ENCODE measurements at regions of chr16 and their contacts with region 1.

Region 1: GRCh38 chr16:10181196-10182162 is 749 bp downstream of the GRIN2A start:
- DNase-seq: peak; percentile 63
- H3K4me3 ChIP-seq: peak overlapping the region in 2 of 3 experiments; percentile 17 to 32
- H3K27ac ChIP-seq: no peak overlapping the region
- H3K4me1 ChIP-seq: peaks cover 31% of the 10 kb centered on the region
- H3K27me3 ChIP-seq: peaks cover 19% of the 10 kb centered on the region
- CTCF ChIP-seq: peak; percentile 68 to 96

Region 2: GRCh38 chr16:9134739-9135138 is 1046.7 kb before region 1 on chr16:
- CTCF ChIA-PET with region 1: no interaction called
- dilution Hi-C with region 1: no loop called
- in situ Hi-C with region 1: no loop called
- intact Hi-C with region 1: loop called (anchors 10 kb)
- DNase-seq: no peak
- H3K4me3 ChIP-seq: no peak overlapping the region
- H3K27ac ChIP-seq: no peak overlapping the region
- H3K4me1 ChIP-seq: peaks cover 3% of the 10 kb centered on the region
- H3K27me3 ChIP-seq: no peaks in the 10 kb centered on the region
- CTCF ChIP-seq: peak; percentile 42 to 70

Region 3: GRCh38 chr16:9159839-9160550 is 1021.5 kb before region 1 on chr16:
- CTCF ChIA-PET with region 1: no interaction called
- dilution Hi-C with region 1: no loop called
- in situ Hi-C with region 1: loop called (anchors 5 to 25 kb)
- intact Hi-C with region 1: loop called (anchors 2 kb)
- DNase-seq: peak; percentile 68
- H3K4me3 ChIP-seq: no peak overlapping the region
- H3K27ac ChIP-seq: no peak overlapping the region
- H3K4me1 ChIP-seq: no peaks in the 10 kb centered on the region
- H3K27me3 ChIP-seq: no peaks in the 10 kb centered on the region
- CTCF ChIP-seq: peak; percentile 84 to 86

Region 4: DNA sequence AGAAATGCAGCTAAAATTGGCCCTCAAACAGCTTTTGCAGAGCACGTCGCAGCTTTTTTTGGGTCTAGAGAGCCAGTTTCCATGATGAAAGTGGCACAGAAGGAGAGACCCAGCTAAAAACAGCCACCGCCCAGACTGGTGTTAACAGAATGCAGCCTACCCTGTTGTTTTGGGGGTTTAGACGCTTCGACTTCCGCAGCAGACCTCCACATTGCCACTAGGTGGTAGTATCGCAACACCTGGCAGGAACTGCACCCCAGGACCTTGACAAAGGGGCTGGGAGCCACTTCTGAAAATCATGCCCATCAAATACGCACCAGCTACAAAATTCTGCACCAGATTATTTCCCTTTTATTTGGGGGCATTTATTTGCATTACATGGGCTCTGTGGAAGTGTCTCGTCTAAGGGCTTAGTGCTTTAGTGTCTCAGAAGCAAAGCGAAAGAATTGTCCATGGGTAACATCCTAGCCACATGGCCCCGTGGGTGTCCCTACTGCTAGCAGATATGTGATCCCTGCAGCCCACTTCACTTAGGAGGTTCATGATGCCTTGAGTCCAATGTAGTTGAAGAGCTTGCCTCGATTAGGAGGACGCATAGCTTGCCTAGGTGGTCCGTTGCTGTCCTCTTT is 922.9 kb before region 1 on chr16:
- CTCF ChIA-PET with region 1: no interaction called
- dilution Hi-C with region 1: no loop called
- in situ Hi-C with region 1: no loop called
- intact Hi-C with region 1: loop called (anchors 1 kb)
- DNase-seq: peak; percentile 12
- H3K4me3 ChIP-seq: no peak overlapping the region
- H3K27ac ChIP-seq: no peak overlapping the region
- H3K4me1 ChIP-seq: no peaks in the 10 kb centered on the region
- H3K27me3 ChIP-seq: no peaks in the 10 kb centered on the region
- CTCF ChIP-seq: peak; percentile 34 to 45

Region 5: GRCh38 chr16:9647981-9648712 is 533.3 kb before region 1 on chr16:
- CTCF ChIA-PET with region 1: no interaction called
- dilution Hi-C with region 1: no loop called
- in situ Hi-C with region 1: loop called in 1 of 2 experiments (anchors 25 kb)
- intact Hi-C with region 1: loop called (anchors 1 kb)
- DNase-seq: peak; percentile 9
- H3K4me3 ChIP-seq: no peak overlapping the region
- H3K27ac ChIP-seq: no peak overlapping the region
- H3K4me1 ChIP-seq: no peaks in the 10 kb centered on the region
- H3K27me3 ChIP-seq: no peaks in the 10 kb centered on the region
- CTCF ChIP-seq: peak; percentile 64 to 77

Region 6: GRCh38 chr16:10039220-10040096 is 142.0 kb before region 1 on chr16:
- CTCF ChIA-PET with region 1: no interaction called
- dilution Hi-C with region 1: no loop called
- in situ Hi-C with region 1: no loop called
- intact Hi-C with region 1: loop called (anchors 10 kb)
- DNase-seq: no peak
- H3K4me3 ChIP-seq: no peak overlapping the region
- H3K27ac ChIP-seq: no peak overlapping the region
- H3K4me1 ChIP-seq: no peaks in the 10 kb centered on the region
- H3K27me3 ChIP-seq: peaks cover 2% of the 10 kb centered on the region
- CTCF ChIP-seq: peak in 1 of 2 donors; percentile 17

Region 7: DNA sequence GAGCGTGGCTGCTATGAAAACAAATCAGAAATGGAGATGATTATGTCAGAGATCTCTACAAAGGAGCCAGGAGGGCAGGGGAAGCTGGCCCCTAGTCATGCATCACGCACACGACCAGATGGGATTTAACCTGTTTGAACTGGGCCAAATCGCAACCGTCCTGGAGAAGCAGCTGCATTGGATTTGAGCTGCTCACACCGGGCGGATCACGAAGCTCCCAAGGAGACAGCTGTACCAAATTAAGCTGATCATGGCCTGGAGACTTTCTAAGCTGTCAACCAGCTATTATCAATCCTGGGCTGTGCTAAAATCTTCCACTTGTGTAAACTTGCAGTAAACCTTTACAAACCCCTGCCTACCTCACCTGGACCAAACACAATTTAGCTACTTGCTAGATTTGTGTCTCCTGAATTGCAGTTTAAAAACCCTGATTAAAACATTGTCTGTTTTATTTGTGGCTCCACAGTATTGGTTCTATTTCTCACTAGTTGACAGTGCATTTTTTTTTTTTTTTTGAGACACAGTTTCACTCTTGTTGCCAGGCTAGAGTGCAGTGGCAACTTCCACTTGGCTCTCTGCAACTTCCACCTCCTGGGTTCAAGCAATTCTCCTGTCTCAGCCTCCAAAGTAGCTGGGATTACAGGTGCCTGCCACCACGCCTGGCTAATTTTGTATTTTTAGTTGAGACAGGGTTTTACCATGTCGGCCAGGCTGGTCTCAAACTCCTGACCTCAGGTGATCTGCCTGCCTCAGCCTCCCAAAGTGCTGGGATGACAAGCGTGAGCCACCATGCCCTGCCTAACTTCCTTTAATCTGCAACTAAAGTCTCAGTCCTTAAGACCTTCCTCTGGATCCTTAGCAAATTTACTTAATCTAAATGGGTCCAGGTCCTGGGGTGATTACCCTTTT is 99.0 kb after region 1 on chr16:
- CTCF ChIA-PET with region 1: no interaction called
- dilution Hi-C with region 1: no loop called
- in situ Hi-C with region 1: no loop called
- intact Hi-C with region 1: no loop called
- DNase-seq: no peak
- H3K4me3 ChIP-seq: no peak overlapping the region
- H3K27ac ChIP-seq: no peak overlapping the region
- H3K4me1 ChIP-seq: no peaks in the 10 kb centered on the region
- H3K27me3 ChIP-seq: no peaks in the 10 kb centered on the region
- CTCF ChIP-seq: no peak

Region 8: GRCh38 chr16:10737068-10737625 is 555.7 kb after region 1 on chr16:
- CTCF ChIA-PET with region 1: no interaction called
- dilution Hi-C with region 1: no loop called
- in situ Hi-C with region 1: no loop called
- intact Hi-C with region 1: loop called (anchors 5 kb)
- DNase-seq: peak; percentile 50
- H3K4me3 ChIP-seq: no peak overlapping the region
- H3K27ac ChIP-seq: no peak overlapping the region
- H3K4me1 ChIP-seq: peaks cover 8% of the 10 kb centered on the region
- H3K27me3 ChIP-seq: no peaks in the 10 kb centered on the region
- CTCF ChIP-seq: peak; percentile 85 to 90

Measured in mammary epithelial cell (primary cell).